ENCODE measurements at regions of chr6 and their contacts with region 1.

Region 1: DNA sequence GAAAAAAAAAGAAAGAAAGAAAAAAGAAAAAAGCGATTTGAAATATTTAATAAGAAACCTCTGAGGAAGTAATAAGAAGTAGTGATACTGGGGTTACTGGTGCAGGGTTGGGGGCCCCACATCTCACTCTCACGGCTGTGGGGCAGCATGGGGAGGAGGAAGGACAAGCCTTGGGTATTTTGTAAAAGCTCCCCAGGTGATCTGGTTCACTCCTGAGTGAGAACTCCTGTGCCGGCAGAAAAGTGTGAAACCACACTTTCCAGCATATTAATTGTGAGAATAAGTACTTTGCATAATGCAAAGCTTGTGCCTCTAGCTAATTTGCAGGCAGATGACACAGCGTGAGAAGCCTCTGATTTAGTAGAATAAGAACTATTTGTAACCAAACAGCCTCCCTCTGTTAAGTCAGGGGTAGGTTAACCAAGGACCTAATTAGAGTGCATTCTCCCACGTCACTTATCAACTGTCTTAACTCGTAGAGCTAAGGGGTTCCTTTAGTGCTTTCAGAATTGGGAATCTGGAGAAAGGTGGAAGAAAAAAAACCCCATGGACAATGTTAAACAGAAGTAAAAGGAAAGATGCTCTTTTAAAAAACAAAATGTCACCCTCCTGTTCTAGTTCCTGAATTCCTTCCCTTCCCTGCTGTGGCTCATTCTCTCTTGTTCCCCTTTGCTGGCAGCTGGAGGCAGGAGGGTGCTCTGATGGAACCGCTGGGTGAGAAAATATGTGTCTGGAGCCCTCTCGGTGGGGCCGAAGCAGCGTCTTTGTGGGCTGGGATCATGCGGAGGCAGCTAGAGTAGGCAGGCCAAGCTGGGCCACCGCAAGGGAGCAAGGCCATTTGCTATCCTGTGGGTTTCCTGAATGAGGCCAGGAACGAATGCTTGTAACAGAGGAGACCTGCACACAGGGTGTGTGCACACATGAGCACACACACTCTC is 108.7 kb downstream of the FYN start:
- DNase-seq: peak in 2 of 10 donors; percentile 26 to 27
- ATAC-seq: peak in 1 of 2 donors; percentile 9
- H3K4me3 Mint-ChIP-seq: peak overlapping the region; percentile 42 to 90 (median 70)
- H3K27ac Mint-ChIP-seq: peak overlapping the region; percentile 87 to 100 (median 95)
- H3K4me1 Mint-ChIP-seq: peaks cover 71 to 100% (median 99%) of the 10 kb centered on the region in 4 donors
- H3K27me3 Mint-ChIP-seq: no peaks in the 10 kb centered on the region

Region 2: DNA sequence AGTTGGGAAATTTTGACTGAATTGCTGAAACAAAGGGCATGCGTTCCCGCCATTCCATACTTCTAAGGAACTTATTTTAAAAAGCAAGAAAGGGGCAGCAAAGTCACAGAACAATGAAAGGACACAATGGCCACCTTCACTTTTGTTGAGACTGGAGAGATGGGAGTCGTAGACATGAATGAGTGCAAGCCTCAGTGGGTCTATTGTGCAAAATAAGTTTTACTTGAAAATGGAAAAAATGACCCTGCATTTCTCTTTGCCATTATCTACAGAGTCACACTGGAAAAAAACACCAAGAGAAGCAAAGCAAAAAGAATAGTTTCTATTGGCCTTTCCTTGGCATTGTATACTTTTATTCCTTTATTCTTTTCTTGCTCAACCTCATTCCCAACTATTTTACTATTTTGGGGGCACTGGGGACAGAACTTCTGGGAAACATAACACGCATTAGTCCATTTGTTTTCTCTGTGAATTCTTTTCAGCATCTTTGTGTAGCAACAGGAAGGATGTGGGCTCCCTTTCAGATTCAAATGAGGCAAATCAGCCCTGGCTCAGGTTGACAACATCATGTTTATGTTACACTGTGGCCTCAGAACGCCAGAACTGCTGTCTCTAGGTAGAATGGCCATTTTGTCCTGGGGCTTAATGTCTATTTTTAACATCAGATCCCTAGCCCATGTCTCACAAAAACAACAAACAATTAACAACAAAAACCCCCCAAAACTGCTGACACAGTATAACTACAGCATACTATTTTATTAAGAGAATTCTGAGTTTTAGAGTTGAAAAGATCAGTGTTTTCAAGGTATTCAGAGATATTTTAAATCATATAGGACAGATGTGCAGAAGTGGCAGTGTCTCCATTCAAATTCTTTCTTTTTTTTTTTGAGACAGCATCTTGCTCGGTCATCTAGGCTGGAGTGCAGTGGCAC is 13.5 kb before region 1 on chr6:
- POLR2A ChIA-PET with region 1: interaction called, 12 read pairs
- DNase-seq: peak in 9 of 10 donors; percentile 46 to 85 (median 75)
- ATAC-seq: peak; percentile 88 to 95
- H3K4me3 Mint-ChIP-seq: peak overlapping the region; percentile 40 to 82 (median 72)
- H3K27ac Mint-ChIP-seq: peak overlapping the region; percentile 92 to 99 (median 96)
- H3K4me1 Mint-ChIP-seq: peaks cover 46 to 96% (median 90%) of the 10 kb centered on the region in 4 donors
- H3K27me3 Mint-ChIP-seq: no peaks in the 10 kb centered on the region

Region 3: DNA sequence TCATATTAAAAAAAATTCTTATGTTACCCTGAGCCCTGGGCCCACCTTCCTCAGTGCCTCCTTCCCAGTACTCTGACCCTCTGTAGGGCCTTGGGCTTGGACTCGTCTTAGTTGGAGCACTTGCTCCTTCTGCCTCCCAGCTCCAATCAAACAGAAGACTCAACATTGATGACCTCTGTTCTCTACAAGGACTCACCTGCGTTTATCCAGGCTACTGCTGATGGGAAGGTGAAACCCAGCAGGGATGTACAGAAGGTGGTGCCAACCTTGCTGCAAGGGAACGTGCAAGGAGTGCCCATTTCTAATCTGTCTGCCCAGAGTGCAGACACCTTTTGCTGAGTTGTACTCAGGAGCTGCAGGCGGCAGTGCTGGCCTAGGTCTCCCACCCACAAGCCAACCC is 69.8 kb after region 1 on chr6:
- POLR2A ChIA-PET with region 1: no interaction called
- DNase-seq: no peak
- ATAC-seq: no peak
- H3K4me3 Mint-ChIP-seq: peak overlapping the region in 2 of 10 donors; percentile 28 to 38
- H3K27ac Mint-ChIP-seq: peak overlapping the region in 6 of 10 donors; percentile 5 to 74 (median 60)
- H3K4me1 Mint-ChIP-seq: peaks cover 40 to 88% (median 64%) of the 10 kb centered on the region in 4 donors
- H3K27me3 Mint-ChIP-seq: no peaks in the 10 kb centered on the region

Measured in naive thymus-derived CD8-positive, alpha-beta T cell (primary cell).